Mammary epithelial cell (primary cell): ENCODE measurements at regions of chr1 and their contacts with region 1.

Region 1: DNA sequence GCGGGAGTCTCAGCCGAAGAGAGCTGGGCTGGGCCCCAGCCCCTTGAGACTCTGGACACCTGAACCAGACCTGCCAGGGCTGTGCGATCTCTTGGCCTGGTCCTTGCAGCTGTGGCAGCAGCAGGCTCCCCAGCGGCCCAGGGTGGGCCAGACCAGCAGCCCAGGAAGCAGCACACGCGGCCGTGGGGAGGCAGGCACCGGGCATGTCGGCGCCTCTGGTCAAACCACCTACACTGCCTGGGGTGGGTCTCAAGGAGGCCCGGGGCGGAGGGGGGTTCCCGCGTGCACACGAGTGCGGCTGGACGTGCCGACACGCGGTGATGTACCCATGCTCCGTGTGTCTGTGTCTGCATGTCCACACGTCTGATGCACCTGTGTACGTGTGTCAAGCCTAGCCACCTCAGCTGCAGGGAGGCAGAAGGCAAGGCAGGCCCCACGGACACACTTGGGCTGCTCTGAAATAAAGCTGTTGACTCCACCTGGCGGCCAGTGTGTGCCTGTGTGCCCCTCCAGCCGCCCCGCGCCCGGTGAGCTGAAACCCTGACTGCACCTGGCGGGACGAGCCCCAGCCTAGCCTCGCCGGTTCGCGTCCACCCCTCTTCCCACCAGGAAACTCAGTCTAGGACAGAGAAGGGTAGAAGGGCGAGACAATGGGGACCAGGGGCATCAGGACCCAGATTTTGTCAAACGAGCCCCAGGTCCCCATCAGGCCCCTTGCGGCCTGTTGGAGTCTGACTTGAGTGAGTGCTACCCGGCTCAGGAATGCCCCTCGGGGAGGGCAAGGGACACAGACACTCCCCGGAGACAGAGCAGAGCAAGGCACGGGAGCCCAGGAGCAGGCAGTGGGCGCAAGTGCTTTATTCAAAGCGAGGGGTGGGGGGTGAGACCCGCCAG is 11.6 kb downstream of the SCNN1D start:
- DNase-seq: peak; percentile 61
- H3K4me3 ChIP-seq: no peak overlapping the region
- H3K27ac ChIP-seq: no peak overlapping the region
- H3K4me1 ChIP-seq: peaks cover 9% of the 10 kb centered on the region
- H3K27me3 ChIP-seq: no peaks in the 10 kb centered on the region
- CTCF ChIP-seq: peak; percentile 68 to 70

Region 2: DNA sequence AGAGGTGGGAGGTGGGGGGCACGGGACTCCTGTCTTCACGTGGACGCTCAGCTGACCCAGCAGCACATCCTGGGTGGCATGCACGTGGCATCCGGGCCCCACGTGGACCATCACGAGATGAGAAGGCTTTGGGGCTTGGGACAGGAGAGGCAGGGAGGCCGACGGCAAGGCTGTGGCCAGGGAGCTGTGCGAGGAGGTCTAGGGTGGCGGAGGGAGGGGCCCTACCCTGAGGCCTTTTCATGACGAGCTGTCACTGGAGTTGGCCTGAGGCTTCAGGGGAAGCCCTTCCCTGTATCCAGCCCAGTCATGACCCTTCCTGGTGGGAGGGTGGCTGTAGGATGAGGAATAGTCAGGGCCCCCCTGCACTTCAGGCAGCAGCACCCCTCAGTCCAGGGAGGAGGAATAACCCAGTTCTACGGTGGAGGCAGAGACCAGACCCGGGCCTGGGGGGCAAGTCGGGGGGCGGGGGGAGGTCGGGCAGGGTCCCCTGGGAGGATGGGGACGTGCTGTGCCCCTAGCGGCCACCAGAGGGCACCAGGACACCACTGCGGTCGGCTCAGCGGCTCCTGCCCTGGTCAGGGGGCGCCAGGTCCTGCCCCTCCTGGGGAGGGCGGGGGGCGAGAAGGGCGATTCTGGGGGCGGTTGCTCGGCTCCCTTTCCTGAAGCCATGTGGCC is 307.9 kb before region 1 on chr1:
- CTCF ChIA-PET with region 1: no interaction called
- dilution Hi-C with region 1: no loop called
- in situ Hi-C with region 1: loop called in 1 of 2 experiments (anchors 25 kb)
- intact Hi-C with region 1: loop called (anchors 2 kb)
- DNase-seq: no peak
- H3K4me3 ChIP-seq: no peak overlapping the region
- H3K27ac ChIP-seq: no peak overlapping the region
- H3K4me1 ChIP-seq: no peaks in the 10 kb centered on the region
- H3K27me3 ChIP-seq: peaks cover 2% of the 10 kb centered on the region
- CTCF ChIP-seq: peak; percentile 28 to 86

Region 3: GRCh38 chr1:1019122-1019999 is 272.4 kb before region 1 on chr1:
- CTCF ChIA-PET with region 1: interaction called, 24 read pairs
- dilution Hi-C with region 1: no loop called
- in situ Hi-C with region 1: no loop called
- intact Hi-C with region 1: loop called (anchors 2 kb)
- DNase-seq: peak; percentile 78
- H3K4me3 ChIP-seq: peak overlapping the region in 1 of 3 experiments; percentile 48
- H3K27ac ChIP-seq: no peak overlapping the region
- H3K4me1 ChIP-seq: peaks cover 34% of the 10 kb centered on the region
- H3K27me3 ChIP-seq: no peaks in the 10 kb centered on the region
- CTCF ChIP-seq: peak in 1 of 2 donors; percentile 54

Region 4: GRCh38 chr1:1122078-1122811 is 169.6 kb before region 1 on chr1:
- CTCF ChIA-PET with region 1: interaction called, 20 read pairs
- dilution Hi-C with region 1: no loop called
- in situ Hi-C with region 1: no loop called
- intact Hi-C with region 1: loop called (anchors 2 kb)
- DNase-seq: peak; percentile 51
- H3K4me3 ChIP-seq: peak overlapping the region; percentile 22 to 39 (median 32)
- H3K27ac ChIP-seq: no peak overlapping the region
- H3K4me1 ChIP-seq: peaks cover 9% of the 10 kb centered on the region
- H3K27me3 ChIP-seq: peaks cover 2% of the 10 kb centered on the region
- CTCF ChIP-seq: peak; percentile 69 to 92

Region 5: GRCh38 chr1:1730870-1731269 is 439.1 kb after region 1 on chr1:
- CTCF ChIA-PET with region 1: no interaction called
- dilution Hi-C with region 1: no loop called
- in situ Hi-C with region 1: no loop called
- intact Hi-C with region 1: no loop called
- DNase-seq: no peak
- H3K4me3 ChIP-seq: no peak overlapping the region
- H3K27ac ChIP-seq: no peak overlapping the region
- H3K4me1 ChIP-seq: no peaks in the 10 kb centered on the region
- H3K27me3 ChIP-seq: no peaks in the 10 kb centered on the region
- CTCF ChIP-seq: no peak